ENCODE measurements at regions of chr10 and their contacts with region 1.

Region 1: DNA sequence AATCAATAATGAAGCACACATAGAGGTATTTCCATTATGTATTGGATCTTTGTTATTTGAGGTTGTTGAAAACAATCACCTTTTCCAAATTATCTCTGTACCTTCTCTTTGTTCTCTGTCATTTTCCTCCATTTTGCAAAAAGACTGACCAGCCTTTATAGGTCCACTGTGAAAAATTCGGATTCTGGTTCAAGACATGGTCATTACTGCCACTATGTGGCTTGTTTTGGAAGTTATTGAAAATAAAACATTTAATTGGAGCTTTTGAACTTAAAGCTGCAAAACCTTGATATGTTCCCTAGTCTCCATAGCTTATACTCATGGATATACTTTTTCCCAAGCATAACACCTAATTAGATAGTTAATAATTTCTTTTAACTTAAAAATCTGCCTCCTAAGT is 1094.4 kb downstream of the NRG3 start:
- DNase-seq: peak; percentile 14
- H3K4me3 ChIP-seq: no peak overlapping the region
- H3K27ac ChIP-seq: no peak overlapping the region
- H3K4me1 ChIP-seq: no peaks in the 10 kb centered on the region; a peak in 1 of 4 replicates
- H3K27me3 ChIP-seq: no peaks in the 10 kb centered on the region
- CTCF ChIP-seq: peak; percentile 74
- EP300 ChIP-seq: no peak
- RAD21 ChIP-seq: peak; percentile 77

Region 2: GRCh38 chr10:82796510-82796909 is 172.9 kb before region 1 on chr10:
- CTCF ChIA-PET with region 1: interaction called, 11 read pairs
- POLR2A ChIA-PET with region 1: no interaction called
- DNase-seq: peak; percentile 9
- H3K4me3 ChIP-seq: no peak overlapping the region; a peak in 1 of 4 replicates
- H3K27ac ChIP-seq: no peak overlapping the region
- H3K4me1 ChIP-seq: peaks cover 3 to 4% of the 10 kb centered on the region in 2 experiments; a peak in 2 of 4 replicates
- H3K27me3 ChIP-seq: no peaks in the 10 kb centered on the region
- CTCF ChIP-seq: peak; percentile 76
- EP300 ChIP-seq: no peak
- RAD21 ChIP-seq: peak; percentile 88